Spleen (tissue), 13 donors: ENCODE measurements at regions of chr17 and their contacts with region 1.

Region 1: DNA sequence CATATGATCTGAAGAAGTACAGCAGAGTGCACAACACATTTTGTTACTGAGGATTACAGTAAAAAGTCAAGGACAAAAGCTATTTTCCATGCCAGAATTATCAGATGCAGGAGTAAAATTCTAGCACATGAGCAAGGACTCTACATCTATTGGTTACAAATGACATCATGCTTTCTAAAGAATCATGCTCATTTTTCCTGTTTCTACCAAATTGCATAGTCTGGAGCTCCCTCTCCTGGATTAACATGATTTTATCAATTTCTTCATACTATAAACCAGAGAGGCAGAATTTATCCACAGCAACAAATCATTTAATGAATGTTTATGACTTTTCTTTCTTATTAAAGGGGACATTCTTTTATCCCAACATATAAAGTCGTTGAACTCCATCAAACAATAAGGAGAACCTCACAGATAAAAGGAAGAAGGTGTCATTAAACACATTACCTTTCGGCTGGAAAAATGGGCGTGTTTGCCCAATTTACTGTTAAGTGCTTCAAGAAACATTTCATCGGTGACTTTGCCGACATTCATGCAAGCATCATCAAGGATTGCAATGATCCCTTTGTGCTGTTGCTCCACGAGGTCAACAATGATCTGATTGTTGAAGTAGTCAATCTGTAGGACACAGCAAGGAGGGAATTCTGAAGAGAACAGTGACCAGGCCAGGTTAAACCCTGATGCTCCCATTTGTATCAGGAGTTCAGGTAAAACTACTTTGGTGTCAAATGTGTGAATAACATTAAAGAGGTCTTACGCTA is 121.7 kb downstream of the MYO1D start:
- DNase-seq: no peak
- H3K4me3 ChIP-seq: no peak overlapping the region
- H3K27ac ChIP-seq: peak overlapping the region in 2 of 8 donors; percentile 12 to 26
- H3K4me1 ChIP-seq: no peaks in the 10 kb centered on the region
- H3K27me3 ChIP-seq: no peaks in the 10 kb centered on the region
- CTCF ChIP-seq: peak; percentile 16 to 77 (median 57)
- POLR2A ChIP-seq: no peak

Region 2: GRCh38 chr17:32461853-32462617 is 293.2 kb before region 1 on chr17:
- intact Hi-C with region 1: loop called (anchors 5 kb)
- DNase-seq: no peak
- H3K4me3 ChIP-seq: no peak overlapping the region
- H3K27ac ChIP-seq: no peak overlapping the region
- H3K4me1 ChIP-seq: peaks cover 0 to 17% (median 10%) of the 10 kb centered on the region in 6 donors
- H3K27me3 ChIP-seq: no peaks in the 10 kb centered on the region
- CTCF ChIP-seq: peak in 10 of 11 experiments; percentile 22 to 72 (median 50)
- POLR2A ChIP-seq: no peak

Region 3: DNA sequence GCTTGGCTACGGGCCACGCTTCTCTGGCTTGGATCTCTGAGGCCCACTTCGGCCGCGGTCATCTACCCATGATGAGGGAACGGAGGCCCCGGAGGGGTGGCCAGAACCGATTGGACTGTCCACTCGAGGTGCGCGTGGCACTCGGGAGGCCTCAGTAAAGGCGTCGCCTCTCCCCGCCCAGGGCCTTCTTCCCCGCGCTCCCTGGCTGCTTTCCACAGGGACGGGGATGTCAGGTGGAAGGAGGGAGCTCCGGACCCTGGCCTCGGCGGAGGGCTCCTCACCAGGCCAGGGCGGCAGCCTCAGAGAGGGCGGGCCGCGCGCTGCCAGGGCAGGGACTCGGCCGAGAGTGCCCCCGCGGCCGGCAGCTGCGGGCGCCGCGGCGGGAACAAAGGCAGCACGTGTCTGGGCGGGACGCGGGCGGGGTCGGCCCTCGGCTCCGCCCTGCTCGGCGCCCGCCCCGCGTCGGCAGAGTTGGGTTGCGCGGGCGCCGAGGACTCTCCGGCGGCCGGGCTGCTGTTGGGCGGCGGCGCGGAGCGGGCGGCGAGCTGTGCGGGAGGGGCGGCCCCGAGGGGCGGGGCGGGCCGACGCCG is 269.0 kb before region 1 on chr17:
- intact Hi-C with region 1: loop called (anchors 5 kb)
- DNase-seq: peak; percentile 94
- H3K4me3 ChIP-seq: peak overlapping the region; percentile 23 to 88 (median 60)
- H3K27ac ChIP-seq: peak overlapping the region in 7 of 8 donors; percentile 52 to 92 (median 80)
- H3K4me1 ChIP-seq: peaks cover 10 to 74% (median 58%) of the 10 kb centered on the region in 6 donors
- H3K27me3 ChIP-seq: no peaks in the 10 kb centered on the region
- CTCF ChIP-seq: no peak
- POLR2A ChIP-seq: no peak

Region 4: GRCh38 chr17:32609085-32609484 is 146.1 kb before region 1 on chr17:
- intact Hi-C with region 1: no loop called
- DNase-seq: peak; percentile 92
- H3K4me3 ChIP-seq: no peak overlapping the region
- H3K27ac ChIP-seq: peak overlapping the region in 1 of 8 donors; percentile 40
- H3K4me1 ChIP-seq: peaks cover 0 to 11% (median 7%) of the 10 kb centered on the region in 6 donors
- H3K27me3 ChIP-seq: no peaks in the 10 kb centered on the region
- CTCF ChIP-seq: peak; percentile 57 to 88 (median 77)
- POLR2A ChIP-seq: no peak

Region 5: DNA sequence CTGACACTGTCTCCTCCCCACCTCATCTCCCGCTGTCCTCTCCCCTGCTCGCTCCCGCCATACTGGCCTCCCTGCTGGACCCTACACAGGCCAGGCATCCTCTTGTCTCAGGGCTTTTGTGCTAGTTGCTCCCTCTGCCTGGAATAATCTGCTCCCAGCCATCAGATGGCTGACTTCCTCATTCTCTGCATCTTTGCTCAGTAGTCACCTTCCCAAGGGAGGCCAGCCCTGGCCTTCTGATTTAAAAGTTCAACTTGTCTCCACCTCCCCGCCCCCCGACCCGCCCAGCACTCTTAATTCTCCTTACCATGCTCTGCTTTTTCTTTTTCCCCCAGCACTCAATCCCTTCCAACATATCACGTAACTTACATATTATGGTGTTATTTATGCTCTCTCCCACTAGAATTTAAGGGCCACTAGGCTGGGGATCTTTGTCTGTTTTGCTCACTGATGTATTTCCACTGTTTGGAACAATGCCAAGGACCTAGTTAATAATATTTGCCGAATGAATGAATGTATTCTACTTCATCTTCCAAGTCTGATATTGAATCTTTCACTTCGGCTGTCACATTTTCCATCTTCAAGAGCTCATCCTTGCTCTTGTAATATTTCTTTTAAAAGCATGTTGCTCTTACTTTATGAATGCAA is 90.2 kb before region 1 on chr17:
- intact Hi-C with region 1: loop called (anchors 10 kb)
- DNase-seq: no peak
- H3K4me3 ChIP-seq: no peak overlapping the region
- H3K27ac ChIP-seq: no peak overlapping the region
- H3K4me1 ChIP-seq: no peaks in the 10 kb centered on the region
- H3K27me3 ChIP-seq: no peaks in the 10 kb centered on the region
- CTCF ChIP-seq: no peak
- POLR2A ChIP-seq: no peak

Region 6: DNA sequence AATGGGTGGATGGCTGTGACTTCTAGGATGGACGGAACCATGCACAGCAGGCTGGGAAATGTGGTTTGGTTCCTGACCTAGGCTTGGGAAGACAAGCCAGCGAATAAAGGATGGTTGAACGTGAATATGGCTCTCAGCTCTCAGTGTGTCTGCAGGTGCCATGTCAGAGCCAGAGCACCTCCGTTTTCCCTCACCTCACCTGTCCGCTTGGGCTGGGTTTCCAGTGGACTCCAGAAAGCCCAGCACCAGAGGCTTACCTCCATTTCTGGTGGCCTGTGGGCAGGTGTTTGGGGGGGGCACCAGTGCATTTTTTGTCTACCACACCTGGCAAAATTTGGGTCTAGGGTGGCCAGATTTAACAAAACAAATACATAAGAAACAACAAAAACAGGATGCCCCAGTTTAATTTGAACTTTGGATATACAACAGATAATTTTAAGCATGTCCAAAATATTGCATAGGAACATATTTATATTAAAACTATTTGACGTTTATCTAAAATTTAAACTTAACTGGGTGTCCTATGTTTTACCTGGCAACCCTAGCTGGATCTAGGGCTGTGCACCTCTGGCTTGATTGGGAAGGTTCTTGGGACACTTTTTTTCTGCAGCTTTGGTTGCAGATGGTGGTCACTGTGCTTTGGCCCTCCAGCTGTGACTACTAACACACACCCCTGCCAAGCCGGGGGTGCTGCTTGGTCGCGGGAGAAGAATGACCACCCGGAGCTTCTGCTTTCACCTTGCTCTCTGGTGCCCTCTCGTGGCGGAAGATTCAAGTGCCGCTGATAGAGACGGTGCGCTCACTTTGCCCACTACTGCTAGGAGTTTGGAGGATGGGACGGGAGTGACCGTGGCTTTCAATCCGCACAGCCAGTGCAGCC is 242.8 kb after region 1 on chr17:
- intact Hi-C with region 1: no loop called
- DNase-seq: peak; percentile 88
- H3K4me3 ChIP-seq: peak overlapping the region in 1 of 8 donors; percentile 17
- H3K27ac ChIP-seq: no peak overlapping the region
- H3K4me1 ChIP-seq: peaks cover 0 to 7% (median 6%) of the 10 kb centered on the region in 6 donors
- H3K27me3 ChIP-seq: peaks cover 0 to 26% (median 8%) of the 10 kb centered on the region in 7 donors
- CTCF ChIP-seq: peak; percentile 29 to 89 (median 82)
- POLR2A ChIP-seq: no peak